ENCODE measurements at regions of chr11 and their contacts with region 1.

Region 1: DNA sequence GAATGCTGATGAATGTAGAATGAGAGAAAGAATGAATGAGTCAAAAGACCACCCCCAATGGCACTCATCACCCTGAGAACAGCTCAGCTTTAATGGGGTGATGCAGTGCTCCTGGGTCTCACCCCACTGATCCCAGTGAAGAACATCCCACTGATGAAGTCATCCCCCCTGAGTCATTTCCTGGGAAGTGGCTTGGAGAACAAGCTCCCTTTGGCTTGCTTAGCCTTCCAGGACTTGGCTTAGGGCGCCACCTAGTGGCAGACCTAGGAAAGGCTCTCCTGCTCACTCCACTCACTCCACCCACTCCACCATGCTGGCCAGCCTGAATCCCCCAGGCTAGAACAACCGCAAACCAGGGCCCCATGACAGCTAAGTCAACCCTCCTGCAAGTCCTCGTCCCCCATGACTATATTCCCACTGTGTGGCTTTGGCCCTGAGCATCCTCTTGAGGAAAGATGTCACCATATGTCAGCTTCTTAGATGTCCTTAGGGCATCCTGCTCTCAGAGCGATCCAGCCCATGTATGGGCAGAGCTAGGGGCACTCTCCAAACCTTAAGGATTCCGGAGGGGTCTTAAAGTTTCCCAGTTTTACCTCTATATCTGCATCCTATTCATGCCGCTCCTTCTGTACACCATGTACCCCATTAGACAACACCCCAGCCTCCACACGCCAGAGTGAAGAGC is 17.8 kb upstream of the TMPRSS13 start:
- DNase-seq: peak; percentile 92
- ATAC-seq: peak; percentile 59
- H3K4me3 Mint-ChIP-seq: no peak overlapping the region
- H3K27ac Mint-ChIP-seq: peak overlapping the region; percentile 68
- H3K4me1 Mint-ChIP-seq: peaks cover 79% of the 10 kb centered on the region
- H3K27me3 Mint-ChIP-seq: no peaks in the 10 kb centered on the region

Region 2: GRCh38 chr11:117572129-117572528 is 374.9 kb before region 1 on chr11:
- CTCF ChIA-PET with region 1: no interaction called
- POLR2A ChIA-PET with region 1: no interaction called
- intact Hi-C with region 1: no loop called
- DNase-seq: no peak
- ATAC-seq: no peak
- H3K4me3 Mint-ChIP-seq: no peak overlapping the region
- H3K27ac Mint-ChIP-seq: no peak overlapping the region
- H3K4me1 Mint-ChIP-seq: no peaks in the 10 kb centered on the region
- H3K27me3 Mint-ChIP-seq: peaks cover 5% of the 10 kb centered on the region

Region 3: GRCh38 chr11:117807482-117808327 is 139.3 kb before region 1 on chr11:
- CTCF ChIA-PET with region 1: interaction called, 42 read pairs
- POLR2A ChIA-PET with region 1: no interaction called
- intact Hi-C with region 1: loop called (anchors 1 to 2 kb)
- DNase-seq: peak; percentile 87
- ATAC-seq: peak; percentile 56
- H3K4me3 Mint-ChIP-seq: no peak overlapping the region
- H3K27ac Mint-ChIP-seq: no peak overlapping the region
- H3K4me1 Mint-ChIP-seq: peaks cover 15% of the 10 kb centered on the region
- H3K27me3 Mint-ChIP-seq: peaks cover 3% of the 10 kb centered on the region

Region 4: DNA sequence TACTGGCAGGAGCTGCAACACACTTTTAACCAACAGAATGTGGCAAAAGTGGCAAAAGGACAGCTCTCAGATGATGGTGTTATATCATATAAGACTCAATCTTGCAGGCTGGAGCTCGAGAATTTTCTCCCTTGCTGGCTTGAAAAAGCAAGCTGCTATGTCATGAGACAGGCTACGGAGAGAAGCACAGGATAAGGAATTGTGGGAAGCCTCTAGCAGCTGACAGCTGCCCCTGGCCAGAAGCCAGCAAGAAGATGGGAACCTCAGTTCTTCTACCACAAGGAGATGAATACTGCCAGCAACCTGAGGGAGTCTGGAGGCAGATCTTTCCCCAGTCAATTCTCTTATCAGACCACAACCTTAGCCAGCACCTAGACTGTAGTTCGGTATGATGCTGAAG is 95.1 kb before region 1 on chr11:
- CTCF ChIA-PET with region 1: interaction called, 72 read pairs
- POLR2A ChIA-PET with region 1: no interaction called
- intact Hi-C with region 1: no loop called
- DNase-seq: no peak
- ATAC-seq: no peak
- H3K4me3 Mint-ChIP-seq: no peak overlapping the region
- H3K27ac Mint-ChIP-seq: no peak overlapping the region
- H3K4me1 Mint-ChIP-seq: peaks cover 7% of the 10 kb centered on the region
- H3K27me3 Mint-ChIP-seq: peaks cover 11% of the 10 kb centered on the region

Region 5: DNA sequence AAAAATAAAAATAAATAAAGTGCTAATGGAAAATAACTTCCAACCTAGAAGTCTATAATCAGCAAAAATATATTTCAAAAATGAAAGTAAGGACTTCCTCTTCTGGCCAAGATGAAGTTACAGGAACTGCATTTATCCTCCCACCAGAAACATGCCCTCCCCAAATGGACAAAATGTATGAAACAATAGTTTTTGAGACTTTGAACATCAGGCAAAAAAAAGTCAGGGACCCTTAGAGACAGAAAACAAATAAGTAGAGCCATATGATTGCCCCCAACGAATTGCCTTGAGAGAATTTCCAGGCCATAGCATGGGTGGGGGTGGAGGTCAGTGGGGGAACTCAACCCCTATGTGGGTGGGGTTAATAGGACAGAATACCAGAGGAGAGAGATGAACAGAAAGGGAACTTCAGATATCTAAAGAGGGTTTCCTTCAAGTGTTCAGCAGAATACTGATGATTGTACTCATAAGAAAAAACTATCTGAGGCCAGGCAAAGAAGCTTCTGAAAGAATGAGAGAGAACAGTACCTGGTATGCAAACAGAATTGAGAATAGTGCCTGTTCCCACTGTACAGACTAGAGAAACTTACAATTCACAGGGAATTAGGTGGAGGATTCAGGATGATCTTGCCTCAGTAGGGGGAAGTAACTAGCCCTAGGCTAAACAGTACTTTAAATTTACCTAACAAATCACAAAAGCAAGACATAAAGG is 12.6 kb after region 1 on chr11:
- CTCF ChIA-PET with region 1: interaction called, 23 read pairs
- POLR2A ChIA-PET with region 1: interaction called, 4 read pairs
- intact Hi-C with region 1: no loop called
- DNase-seq: no peak
- ATAC-seq: peak; percentile 72
- H3K4me3 Mint-ChIP-seq: peak overlapping the region; percentile 11
- H3K27ac Mint-ChIP-seq: peak overlapping the region; percentile 75
- H3K4me1 Mint-ChIP-seq: peaks cover 35% of the 10 kb centered on the region
- H3K27me3 Mint-ChIP-seq: no peaks in the 10 kb centered on the region

Region 6: GRCh38 chr11:118021146-118021545 is 74.2 kb after region 1 on chr11:
- CTCF ChIA-PET with region 1: interaction called, 11 read pairs
- POLR2A ChIA-PET with region 1: no interaction called
- intact Hi-C with region 1: no loop called
- DNase-seq: no peak
- ATAC-seq: no peak
- H3K4me3 Mint-ChIP-seq: no peak overlapping the region
- H3K27ac Mint-ChIP-seq: no peak overlapping the region
- H3K4me1 Mint-ChIP-seq: peaks cover 12% of the 10 kb centered on the region
- H3K27me3 Mint-ChIP-seq: no peaks in the 10 kb centered on the region

Region 7: DNA sequence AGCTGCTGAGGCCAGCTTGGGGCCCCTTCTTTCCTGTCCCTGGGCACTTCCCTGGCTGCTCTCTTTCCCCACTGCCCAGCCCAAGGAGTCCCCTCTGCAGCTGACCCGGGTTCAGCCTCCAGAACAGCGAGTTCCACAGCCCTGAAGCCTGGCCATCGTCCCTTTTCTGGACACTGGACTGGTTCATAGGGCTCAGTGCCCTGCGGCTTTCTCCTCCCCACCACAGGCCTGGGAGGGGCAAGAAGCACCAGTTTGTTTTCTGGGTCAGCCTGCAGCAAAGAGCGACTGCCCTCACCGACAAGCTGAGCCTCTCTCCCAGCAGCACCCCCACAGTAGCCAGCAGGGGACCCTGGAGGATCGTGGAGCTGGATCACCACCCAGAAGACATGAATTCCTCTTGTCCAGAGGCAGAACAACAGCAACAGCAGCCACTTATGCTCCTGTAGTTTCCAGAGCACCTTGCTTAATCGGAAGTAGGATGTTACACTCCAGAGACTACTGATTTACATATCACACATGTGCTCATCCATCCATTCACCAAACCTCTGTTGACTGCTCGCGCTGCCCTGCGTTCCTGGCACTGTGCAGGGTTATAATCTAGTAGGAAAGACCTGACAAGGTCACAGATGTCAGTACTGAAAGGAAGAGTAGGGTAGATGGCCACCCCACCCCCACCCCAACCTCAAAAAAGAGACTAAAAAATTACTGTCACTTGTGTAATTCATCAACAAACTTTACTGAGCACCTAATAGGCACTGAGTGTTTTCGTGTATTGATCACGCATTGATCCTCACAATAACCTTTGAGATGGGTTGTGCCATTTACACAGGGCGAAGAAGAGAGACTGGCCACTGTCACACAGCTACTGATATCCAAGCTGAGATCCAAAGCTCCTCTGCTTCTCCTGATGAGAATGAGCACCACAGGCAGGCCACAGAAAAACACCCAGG is 923.7 kb after region 1 on chr11:
- CTCF ChIA-PET with region 1: no interaction called
- POLR2A ChIA-PET with region 1: no interaction called
- intact Hi-C with region 1: loop called in 1 of 2 experiments (anchors 10 kb)
- DNase-seq: peak; percentile 61
- ATAC-seq: peak; percentile 70
- H3K4me3 Mint-ChIP-seq: peak overlapping the region; percentile 71
- H3K27ac Mint-ChIP-seq: peak overlapping the region; percentile 99
- H3K4me1 Mint-ChIP-seq: peaks cover 57% of the 10 kb centered on the region
- H3K27me3 Mint-ChIP-seq: no peaks in the 10 kb centered on the region